ENCODE measurements at regions of chr2 and their contacts with region 1.

Region 1: GRCh38 chr2:176140513-176141317 is 10.6 kb upstream of the HOXD4 start:
- DNase-seq: peak; percentile 56 to 92
- H3K4me3 ChIP-seq: peak overlapping the region; percentile 36 to 52 (median 42)
- H3K27ac ChIP-seq: peak overlapping the region in 3 of 5 donors; percentile 1 to 49 (median 32)
- H3K4me1 ChIP-seq: peaks cover 11 to 39% (median 27%) of the 10 kb centered on the region in 4 donors
- H3K27me3 ChIP-seq: peaks cover 15 to 99% (median 86%) of the 10 kb centered on the region in 3 donors
- CTCF ChIP-seq: peak in 5 of 7 experiments; percentile 67 to 81 (median 73)
- EP300 ChIP-seq: no peak
- POLR2A ChIP-seq: no peak

Region 2: GRCh38 chr2:176126929-176127773 is 13.6 kb before region 1 on chr2:
- intact Hi-C with region 1: no loop called
- DNase-seq: peak; percentile 74 to 87
- H3K4me3 ChIP-seq: no peak overlapping the region
- H3K27ac ChIP-seq: no peak overlapping the region
- H3K4me1 ChIP-seq: peaks cover 28 to 57% (median 42%) of the 10 kb centered on the region in 4 donors
- H3K27me3 ChIP-seq: peaks cover 57 to 100% (median 93%) of the 10 kb centered on the region in 3 donors
- CTCF ChIP-seq: peak in 5 of 7 experiments; percentile 62 to 97 (median 87)
- EP300 ChIP-seq: no peak
- POLR2A ChIP-seq: no peak

Region 3: GRCh38 chr2:176643646-176644045 is 502.9 kb after region 1 on chr2:
- intact Hi-C with region 1: loop called (anchors 5 kb)
- DNase-seq: peak in 1 of 2 donors; percentile 64
- H3K4me3 ChIP-seq: no peak overlapping the region
- H3K27ac ChIP-seq: no peak overlapping the region
- H3K4me1 ChIP-seq: no peaks in the 10 kb centered on the region
- H3K27me3 ChIP-seq: peaks cover 0 to 95% (median 40%) of the 10 kb centered on the region in 3 donors
- CTCF ChIP-seq: no peak
- EP300 ChIP-seq: no peak
- POLR2A ChIP-seq: no peak

Measured in stomach (tissue), 19 donors.